ENCODE measurements at regions of chr19 and their contacts with region 1.

Region 1: GRCh38 chr19:1103708-1104310 is at the start of gene GPX4:
- DNase-seq: peak; percentile 99
- H3K4me3 Mint-ChIP-seq: peak within 1 kb of the TSS; percentile 75
- H3K27ac Mint-ChIP-seq: peak within 1 kb of the TSS; percentile 92
- H3K4me1 Mint-ChIP-seq: peaks cover 33% of the 10 kb centered on the region
- H3K27me3 Mint-ChIP-seq: no peaks in the 10 kb centered on the region
- total RNA-seq, gene GPX4: 225 and 239 TPM in 2 replicates

Region 2: GRCh38 chr19:1020868-1021425 is 82.9 kb before region 1 on chr19 and contains the start of gene TMEM259:
- intact Hi-C with region 1: loop called (anchors 1 kb)
- DNase-seq: peak; percentile 99
- H3K4me3 Mint-ChIP-seq: peak within 1 kb of the TSS; percentile 98
- H3K27ac Mint-ChIP-seq: peak within 1 kb of the TSS; percentile 99
- H3K4me1 Mint-ChIP-seq: peaks cover 26% of the 10 kb centered on the region
- H3K27me3 Mint-ChIP-seq: no peaks in the 10 kb centered on the region
- total RNA-seq, gene TMEM259: 154 and 156 TPM in 2 replicates

Region 3: GRCh38 chr19:1064661-1065605 is 38.9 kb before region 1 on chr19:
- intact Hi-C with region 1: loop called (anchors 5 kb)
- DNase-seq: peak; percentile 94
- H3K4me3 Mint-ChIP-seq: peak overlapping the region; percentile 48
- H3K27ac Mint-ChIP-seq: peak overlapping the region; percentile 44
- H3K4me1 Mint-ChIP-seq: peaks cover 29% of the 10 kb centered on the region
- H3K27me3 Mint-ChIP-seq: no peaks in the 10 kb centered on the region

Region 4: GRCh38 chr19:1074544-1075283 is 29.1 kb before region 1 on chr19:
- intact Hi-C with region 1: loop called (anchors 1 kb)
- DNase-seq: peak; percentile 94
- H3K4me3 Mint-ChIP-seq: peak overlapping the region; percentile 78
- H3K27ac Mint-ChIP-seq: peak overlapping the region; percentile 89
- H3K4me1 Mint-ChIP-seq: peaks cover 42% of the 10 kb centered on the region
- H3K27me3 Mint-ChIP-seq: peaks cover 2% of the 10 kb centered on the region

Region 5: DNA sequence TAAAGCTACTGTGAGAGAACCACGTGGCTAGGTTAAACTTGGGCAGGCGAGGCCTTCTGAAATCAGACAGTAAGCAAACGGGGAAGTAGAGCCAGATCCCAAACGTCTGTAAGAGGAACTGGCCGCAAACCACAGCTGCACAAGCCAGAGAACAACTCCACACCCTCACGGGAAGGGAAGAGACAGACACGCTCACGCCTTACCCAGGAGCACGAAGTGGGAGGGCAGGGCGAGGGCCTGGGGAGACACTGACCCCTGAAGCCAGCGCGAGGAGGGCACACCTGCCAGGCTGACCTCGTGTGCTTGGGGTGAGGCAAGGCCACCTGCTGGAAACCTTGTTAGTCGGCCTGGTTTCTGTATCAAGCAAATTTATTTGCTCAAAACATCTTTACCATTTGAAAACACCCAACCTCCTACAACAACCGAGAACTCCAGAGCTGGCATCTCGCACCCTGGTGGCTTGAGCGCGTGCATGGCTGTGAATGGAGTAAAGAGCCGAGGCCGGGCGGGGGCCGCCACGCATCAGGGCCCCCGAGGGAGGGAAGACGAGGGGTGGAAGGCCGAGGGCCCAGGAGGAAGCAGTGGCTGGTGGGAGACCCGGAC is 15.9 kb before region 1 on chr19:
- intact Hi-C with region 1: no loop called
- DNase-seq: peak; percentile 85
- H3K4me3 Mint-ChIP-seq: peak overlapping the region; percentile 70
- H3K27ac Mint-ChIP-seq: peak overlapping the region; percentile 84
- H3K4me1 Mint-ChIP-seq: peaks cover 16% of the 10 kb centered on the region
- H3K27me3 Mint-ChIP-seq: no peaks in the 10 kb centered on the region

Region 6: DNA sequence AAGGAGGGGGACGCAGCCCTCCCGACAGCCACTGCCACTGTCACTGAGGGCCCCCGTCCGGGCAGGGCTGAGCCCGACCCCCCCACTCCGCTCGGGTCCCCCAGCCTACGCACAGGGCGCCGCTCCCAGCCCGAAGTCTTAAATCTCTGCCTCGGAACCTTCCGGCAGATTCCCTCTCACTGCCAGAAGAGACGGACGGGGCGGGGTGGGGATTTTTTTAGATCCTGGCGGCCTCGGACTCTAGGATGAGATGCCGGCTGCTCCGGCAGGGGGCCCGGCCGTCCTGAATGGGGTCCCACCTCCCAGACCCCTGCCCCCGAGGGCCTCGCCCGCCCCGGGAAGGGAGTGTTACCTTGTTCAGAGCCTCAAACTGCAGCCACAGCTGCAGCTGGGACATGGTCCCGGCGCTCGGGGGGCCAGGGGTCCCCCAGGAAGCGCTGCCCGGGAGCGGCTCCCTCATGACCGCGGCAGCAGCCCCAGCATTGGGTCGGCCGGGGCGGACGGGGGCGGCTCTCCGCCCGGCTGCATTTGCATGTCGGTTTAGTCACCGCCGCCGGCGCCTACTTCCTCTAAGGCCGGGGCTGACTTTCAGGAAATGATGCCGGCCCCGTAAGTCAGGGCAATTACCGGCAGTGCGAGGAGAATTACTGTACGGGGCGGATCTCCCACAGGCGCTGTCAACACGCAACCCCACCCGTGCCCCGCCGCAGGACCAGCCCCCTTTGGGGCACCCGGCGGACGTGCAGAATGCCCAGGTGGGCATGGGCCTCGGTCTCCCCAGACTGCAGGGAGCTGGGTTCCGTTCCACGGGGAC is 28.1 kb after region 1 on chr19:
- intact Hi-C with region 1: loop called (anchors 2 kb)
- DNase-seq: peak; percentile 97
- H3K4me3 Mint-ChIP-seq: peak overlapping the region; percentile 93
- H3K27ac Mint-ChIP-seq: peak overlapping the region; percentile 90
- H3K4me1 Mint-ChIP-seq: peaks cover 19% of the 10 kb centered on the region
- H3K27me3 Mint-ChIP-seq: no peaks in the 10 kb centered on the region

Region 7: GRCh38 chr19:1189419-1189818 is 85.6 kb after region 1 on chr19:
- intact Hi-C with region 1: loop called (anchors 5 kb)
- DNase-seq: peak; percentile 85
- H3K4me3 Mint-ChIP-seq: peak overlapping the region; percentile 36
- H3K27ac Mint-ChIP-seq: peak overlapping the region; percentile 68
- H3K4me1 Mint-ChIP-seq: peaks cover 27% of the 10 kb centered on the region
- H3K27me3 Mint-ChIP-seq: no peaks in the 10 kb centered on the region

Measured in activated CD4-positive, alpha-beta T cell treated with anti-CD3 and anti-CD28 coated beads, Interleukin-2, amount 10 ng/mL, durations not matched to agents 24 days and 14 days (primary cell).